AG04449 (cell line): ENCODE measurements at regions of chr4 and their contacts with region 1.

Region 1: GRCh38 chr4:87855559-87855958 is 22.8 kb downstream of the MEPE start:
- DNase-seq: no peak
- H3K4me3 ChIP-seq: no peak overlapping the region
- CTCF ChIP-seq: no peak

Region 2: GRCh38 chr4:87985097-87985886 is 129.7 kb after region 1 on chr4:
- CTCF ChIA-PET with region 1: interaction called, 348 read pairs
- POLR2A ChIA-PET with region 1: interaction called, 3 read pairs
- DNase-seq: no peak
- H3K4me3 ChIP-seq: no peak overlapping the region
- CTCF ChIP-seq: peak; percentile 85

Region 3: GRCh38 chr4:88045021-88045420 is 189.5 kb after region 1 on chr4:
- CTCF ChIA-PET with region 1: no interaction called
- POLR2A ChIA-PET with region 1: no interaction called
- DNase-seq: no peak
- H3K4me3 ChIP-seq: no peak overlapping the region
- CTCF ChIP-seq: no peak

Region 4: GRCh38 chr4:88189881-88190532 is 334.4 kb after region 1 on chr4:
- CTCF ChIA-PET with region 1: no interaction called
- POLR2A ChIA-PET with region 1: no interaction called
- DNase-seq: no peak
- H3K4me3 ChIP-seq: no peak overlapping the region
- CTCF ChIP-seq: no peak